ENCODE measurements at regions of chr12 and their contacts with region 1.

Region 1: GRCh38 chr12:121712461-121713256 is at the start of gene TMEM120B:
- DNase-seq: peak; percentile 93
- ATAC-seq: peak; percentile 92
- H3K4me3 ChIP-seq: peak within 1 kb of the TSS; percentile 84 to 97 (median 89)
- H3K4me3 Mint-ChIP-seq: peak within 1 kb of the TSS; percentile 92
- H3K27ac ChIP-seq: peak within 1 kb of the TSS; percentile 48 to 63
- H3K27ac Mint-ChIP-seq: peak within 1 kb of the TSS; percentile 89
- H3K4me1 ChIP-seq: peaks cover 22 to 28% of the 10 kb centered on the region in 2 donors
- H3K4me1 Mint-ChIP-seq: peaks cover 25% of the 10 kb centered on the region
- H3K27me3 ChIP-seq: no peaks in the 10 kb centered on the region
- H3K27me3 Mint-ChIP-seq: no peaks in the 10 kb centered on the region
- CTCF ChIP-seq: no peak
- total RNA-seq, gene TMEM120B: 9.2 and 11.5 TPM in 2 replicates

Region 2: DNA sequence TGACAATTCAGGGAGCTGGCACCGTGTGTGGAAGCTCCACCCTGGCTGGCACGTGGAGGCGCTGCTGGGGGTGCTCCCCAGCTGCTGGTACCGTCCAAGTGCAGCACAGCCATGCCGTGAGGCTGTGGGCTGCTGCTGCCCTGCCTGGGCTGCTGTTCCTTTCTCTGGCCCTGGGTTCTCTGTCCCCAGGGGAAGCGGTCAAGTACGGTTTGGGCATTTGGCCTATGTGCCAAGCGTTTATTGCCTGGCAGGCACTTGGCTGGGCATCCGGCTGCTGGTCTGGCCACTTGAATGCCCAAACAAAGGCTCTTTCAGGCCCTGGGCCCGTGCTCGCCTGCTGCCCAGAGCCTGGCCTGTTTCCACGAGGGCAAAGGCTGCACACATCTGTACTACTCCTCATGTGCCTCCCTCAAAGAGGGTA is 41.2 kb after region 1 on chr12:
- CTCF ChIA-PET with region 1: no interaction called
- POLR2A ChIA-PET with region 1: no interaction called
- intact Hi-C with region 1: no loop called
- DNase-seq: no peak
- ATAC-seq: no peak
- H3K4me3 ChIP-seq: no peak overlapping the region
- H3K4me3 Mint-ChIP-seq: no peak overlapping the region
- H3K27ac ChIP-seq: no peak overlapping the region
- H3K27ac Mint-ChIP-seq: no peak overlapping the region
- H3K4me1 ChIP-seq: no peaks in the 10 kb centered on the region
- H3K4me1 Mint-ChIP-seq: peaks cover 7% of the 10 kb centered on the region
- H3K27me3 ChIP-seq: no peaks in the 10 kb centered on the region
- H3K27me3 Mint-ChIP-seq: no peaks in the 10 kb centered on the region
- CTCF ChIP-seq: no peak

Region 3: DNA sequence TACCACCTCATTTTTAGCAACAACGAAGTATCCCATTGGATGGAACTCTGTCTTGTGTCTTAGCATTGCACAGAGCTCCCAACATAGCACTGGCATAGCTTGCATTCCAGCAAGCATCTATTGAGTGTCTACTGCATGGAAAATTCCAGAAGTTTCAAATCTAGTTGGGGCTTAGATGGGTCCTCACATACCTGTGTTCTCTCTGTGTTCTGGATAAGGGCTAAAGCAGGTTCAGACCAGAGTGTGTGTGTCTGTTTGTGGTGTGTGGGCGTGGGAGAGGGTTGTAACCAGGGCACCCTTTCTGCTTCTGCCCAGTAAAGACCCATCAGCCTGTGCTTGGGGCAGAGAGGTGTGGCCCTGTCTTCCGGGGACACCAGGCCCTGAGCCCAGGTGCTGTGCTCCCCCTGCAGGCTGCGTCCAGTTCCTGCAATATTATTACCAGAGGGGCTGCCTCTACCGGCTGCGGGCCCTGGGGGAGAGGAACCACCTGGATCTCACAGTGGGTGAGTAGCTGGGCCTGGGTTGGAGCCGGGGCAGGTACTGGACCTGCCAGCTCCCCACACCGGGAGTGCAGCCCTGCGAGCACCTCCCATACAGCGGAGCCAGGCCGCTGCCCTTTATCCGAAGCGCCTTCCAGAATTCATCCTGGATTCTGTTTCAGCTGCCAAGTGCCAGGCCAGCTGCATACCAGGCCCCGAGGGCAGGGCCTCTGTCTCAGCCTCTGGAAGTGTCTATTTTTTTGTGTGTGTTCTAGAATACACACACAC is 60.5 kb after region 1 on chr12:
- CTCF ChIA-PET with region 1: interaction called, 4 read pairs
- POLR2A ChIA-PET with region 1: interaction called, 4 read pairs
- intact Hi-C with region 1: loop called (anchors 5 kb)
- DNase-seq: peak; percentile 87
- ATAC-seq: peak; percentile 96
- H3K4me3 ChIP-seq: no peak overlapping the region
- H3K4me3 Mint-ChIP-seq: no peak overlapping the region
- H3K27ac ChIP-seq: no peak overlapping the region
- H3K27ac Mint-ChIP-seq: peak overlapping the region; percentile 82
- H3K4me1 ChIP-seq: peaks cover 15 to 25% of the 10 kb centered on the region in 2 donors
- H3K4me1 Mint-ChIP-seq: peaks cover 16% of the 10 kb centered on the region
- H3K27me3 ChIP-seq: no peaks in the 10 kb centered on the region
- H3K27me3 Mint-ChIP-seq: no peaks in the 10 kb centered on the region
- CTCF ChIP-seq: peak; percentile 87

Region 4: GRCh38 chr12:121888478-121889266 is 176.0 kb after region 1 on chr12 and contains the start of gene PSMD9:
- CTCF ChIA-PET with region 1: interaction called, 3 read pairs
- POLR2A ChIA-PET with region 1: no interaction called
- intact Hi-C with region 1: loop called (anchors 2 kb)
- DNase-seq: peak; percentile 98
- ATAC-seq: peak; percentile 96
- H3K4me3 ChIP-seq: peak within 1 kb of the TSS; percentile 70 to 92 (median 78)
- H3K4me3 Mint-ChIP-seq: peak within 1 kb of the TSS; percentile 99
- H3K27ac ChIP-seq: peak within 1 kb of the TSS; percentile 86 to 95
- H3K27ac Mint-ChIP-seq: peak within 1 kb of the TSS; percentile 99
- H3K4me1 ChIP-seq: peaks cover 15 to 19% of the 10 kb centered on the region in 2 donors
- H3K4me1 Mint-ChIP-seq: peaks cover 32% of the 10 kb centered on the region
- H3K27me3 ChIP-seq: peaks cover 0 to 5% (median 0%) of the 10 kb centered on the region in 4 experiments
- H3K27me3 Mint-ChIP-seq: no peaks in the 10 kb centered on the region
- CTCF ChIP-seq: peak; percentile 68
- total RNA-seq, gene PSMD9: 37.1 and 38.2 TPM in 2 replicates

Measured in B cell (primary cell).